Activated CD4-positive, alpha-beta memory T cell treated with anti-CD3 and anti-CD28 coated beads for 36 hours (primary cell): ENCODE measurements at regions of chr7 and their contacts with region 1.

Region 1: GRCh38 chr7:17298207-17298839 is at the start of gene AHR:
- DNase-seq: peak; percentile 95
- H3K4me3 Mint-ChIP-seq: peak within 1 kb of the TSS; percentile 90
- H3K27ac Mint-ChIP-seq: peak within 1 kb of the TSS; percentile 93
- H3K4me1 Mint-ChIP-seq: peaks cover 18% of the 10 kb centered on the region
- H3K27me3 Mint-ChIP-seq: no peaks in the 10 kb centered on the region
- total RNA-seq, gene AHR: 40.9 to 43.3 TPM

Region 2: GRCh38 chr7:16420649-16421332 is 877.5 kb before region 1 on chr7:
- CTCF ChIA-PET with region 1: no interaction called
- POLR2A ChIA-PET with region 1: interaction called, 3 read pairs
- intact Hi-C with region 1: loop called (anchors 10 kb)
- DNase-seq: peak; percentile 89
- H3K4me3 Mint-ChIP-seq: peak overlapping the region; percentile 89
- H3K27ac Mint-ChIP-seq: peak overlapping the region; percentile 96
- H3K4me1 Mint-ChIP-seq: peaks cover 17% of the 10 kb centered on the region
- H3K27me3 Mint-ChIP-seq: peaks cover 3% of the 10 kb centered on the region

Region 3: GRCh38 chr7:17041324-17041723 is 257.0 kb before region 1 on chr7:
- CTCF ChIA-PET with region 1: interaction called, 3 read pairs
- POLR2A ChIA-PET with region 1: interaction called, 3 read pairs
- intact Hi-C with region 1: loop called (anchors 5 kb)
- DNase-seq: no peak
- H3K4me3 Mint-ChIP-seq: no peak overlapping the region
- H3K27ac Mint-ChIP-seq: no peak overlapping the region
- H3K4me1 Mint-ChIP-seq: peaks cover 26% of the 10 kb centered on the region
- H3K27me3 Mint-ChIP-seq: peaks cover 1% of the 10 kb centered on the region

Region 4: DNA sequence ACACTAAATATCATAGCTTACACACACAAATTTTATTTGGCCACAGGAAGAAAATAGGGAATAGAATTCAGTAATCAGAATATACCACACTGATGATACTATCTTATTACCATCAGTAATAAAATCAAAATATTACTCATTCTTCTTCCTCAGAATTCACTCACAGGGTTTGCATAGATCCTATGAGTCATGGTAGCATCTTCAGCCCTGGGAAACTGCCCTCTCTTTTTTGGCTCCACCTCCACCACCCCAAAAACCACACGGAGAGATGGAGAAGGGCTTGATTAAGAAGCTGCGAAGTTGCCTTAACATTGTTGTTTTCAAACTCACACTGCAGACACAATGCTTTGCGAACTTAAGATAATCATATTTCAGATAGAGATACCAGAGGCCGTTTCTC is 154.0 kb before region 1 on chr7:
- CTCF ChIA-PET with region 1: interaction called, 16 read pairs
- POLR2A ChIA-PET with region 1: interaction called, 3 read pairs
- intact Hi-C with region 1: loop called (anchors 1 kb)
- DNase-seq: peak; percentile 83
- H3K4me3 Mint-ChIP-seq: peak overlapping the region; percentile 43
- H3K27ac Mint-ChIP-seq: peak overlapping the region; percentile 53
- H3K4me1 Mint-ChIP-seq: peaks cover 46% of the 10 kb centered on the region
- H3K27me3 Mint-ChIP-seq: peaks cover 2% of the 10 kb centered on the region

Region 5: GRCh38 chr7:17255926-17256325 is 42.4 kb before region 1 on chr7:
- CTCF ChIA-PET with region 1: interaction called, 7 read pairs
- POLR2A ChIA-PET with region 1: interaction called, 10 read pairs
- intact Hi-C with region 1: loop called (anchors 1 kb)
- DNase-seq: no peak
- H3K4me3 Mint-ChIP-seq: no peak overlapping the region
- H3K27ac Mint-ChIP-seq: no peak overlapping the region
- H3K4me1 Mint-ChIP-seq: peaks cover 21% of the 10 kb centered on the region
- H3K27me3 Mint-ChIP-seq: no peaks in the 10 kb centered on the region

Region 6: GRCh38 chr7:17640730-17641377 is 342.5 kb after region 1 on chr7:
- CTCF ChIA-PET with region 1: interaction called, 3 read pairs
- POLR2A ChIA-PET with region 1: no interaction called
- intact Hi-C with region 1: loop called (anchors 10 kb)
- DNase-seq: no peak
- H3K4me3 Mint-ChIP-seq: no peak overlapping the region
- H3K27ac Mint-ChIP-seq: no peak overlapping the region
- H3K4me1 Mint-ChIP-seq: no peaks in the 10 kb centered on the region
- H3K27me3 Mint-ChIP-seq: peaks cover 9% of the 10 kb centered on the region